Mammary epithelial cell (primary cell): ENCODE measurements at regions of chr10 and their contacts with region 1.

Region 1: GRCh38 chr10:689433-690371 is at the start of gene DIP2C:
- DNase-seq: peak; percentile 47
- H3K4me3 ChIP-seq: no peak within 1 kb of the TSS
- H3K27ac ChIP-seq: no peak within 1 kb of the TSS
- H3K4me1 ChIP-seq: no peaks in the 10 kb centered on the region
- H3K27me3 ChIP-seq: peaks cover 2% of the 10 kb centered on the region
- CTCF ChIP-seq: no peak
- total RNA-seq, gene DIP2C: 7.1 to 7.3 TPM

Region 2: DNA sequence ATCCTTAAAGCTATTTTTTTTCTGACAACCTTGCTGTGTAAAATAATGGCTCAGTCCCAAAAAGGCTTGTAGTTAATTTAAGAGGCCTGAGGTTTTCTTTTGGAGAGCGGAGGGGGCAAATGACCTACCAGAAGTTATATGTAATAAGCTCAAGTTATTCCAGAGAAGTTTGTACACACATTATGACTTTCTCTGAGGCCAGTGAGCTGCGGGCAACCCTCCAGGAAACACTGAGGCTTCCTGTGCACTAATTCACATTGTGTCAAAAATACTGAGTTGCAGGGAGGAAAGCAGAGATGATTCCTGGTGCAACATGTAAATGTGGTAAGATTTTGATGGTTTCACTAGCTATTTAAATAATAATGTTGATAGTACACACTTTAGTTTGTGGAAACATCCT is 188.8 kb before region 1 on chr10:
- CTCF ChIA-PET with region 1: no interaction called
- dilution Hi-C with region 1: no loop called
- in situ Hi-C with region 1: loop called in 1 of 2 experiments (anchors 10 kb)
- intact Hi-C with region 1: no loop called
- DNase-seq: no peak
- H3K4me3 ChIP-seq: no peak overlapping the region
- H3K27ac ChIP-seq: no peak overlapping the region
- H3K4me1 ChIP-seq: no peaks in the 10 kb centered on the region
- H3K27me3 ChIP-seq: no peaks in the 10 kb centered on the region
- CTCF ChIP-seq: no peak

Region 3: DNA sequence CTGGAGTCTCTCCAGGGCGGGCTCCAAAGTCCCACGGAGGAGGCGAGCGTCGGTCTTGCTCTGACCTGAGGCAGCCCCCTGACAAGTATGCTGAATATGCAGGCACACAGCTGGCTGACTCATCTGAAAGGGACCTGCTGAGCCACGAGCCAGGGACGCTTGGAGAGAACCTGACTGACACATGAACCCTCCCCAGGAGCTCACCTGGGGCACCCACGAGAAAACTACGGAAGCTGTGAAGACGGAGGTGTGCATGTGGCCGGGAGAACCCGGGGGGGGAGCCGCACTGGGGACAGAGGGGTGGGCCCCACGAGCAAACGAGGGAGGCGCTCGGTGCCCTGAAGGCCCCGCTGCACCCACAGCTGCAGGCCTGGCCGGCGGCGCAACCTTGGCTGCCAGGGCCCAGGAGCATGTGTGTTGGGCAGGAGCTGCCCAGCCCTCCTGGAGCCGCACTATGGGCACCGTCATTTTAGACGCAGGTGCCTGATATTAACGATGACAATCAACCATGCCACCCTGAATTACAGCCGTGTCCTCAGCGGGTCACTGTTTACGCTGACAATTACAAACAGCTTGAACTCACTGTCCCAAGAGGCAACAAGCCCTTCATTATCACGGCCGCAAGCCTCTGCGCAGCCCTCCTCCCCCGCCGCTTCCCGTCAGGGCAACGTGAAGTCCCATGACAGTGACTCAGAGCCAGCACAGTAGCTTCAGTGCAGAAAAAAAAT is 64.9 kb before region 1 on chr10:
- CTCF ChIA-PET with region 1: no interaction called
- dilution Hi-C with region 1: no loop called
- in situ Hi-C with region 1: no loop called
- intact Hi-C with region 1: loop called (anchors 2 kb)
- DNase-seq: peak; percentile 32
- H3K4me3 ChIP-seq: no peak overlapping the region
- H3K27ac ChIP-seq: no peak overlapping the region
- H3K4me1 ChIP-seq: no peaks in the 10 kb centered on the region
- H3K27me3 ChIP-seq: no peaks in the 10 kb centered on the region
- CTCF ChIP-seq: no peak

Region 4: GRCh38 chr10:642186-642877 is 47.4 kb before region 1 on chr10:
- CTCF ChIA-PET with region 1: no interaction called
- dilution Hi-C with region 1: no loop called
- in situ Hi-C with region 1: no loop called
- intact Hi-C with region 1: no loop called
- DNase-seq: no peak
- H3K4me3 ChIP-seq: no peak overlapping the region
- H3K27ac ChIP-seq: no peak overlapping the region
- H3K4me1 ChIP-seq: no peaks in the 10 kb centered on the region
- H3K27me3 ChIP-seq: no peaks in the 10 kb centered on the region
- CTCF ChIP-seq: no peak

Region 5: GRCh38 chr10:1034758-1035157 is 345.1 kb after region 1 on chr10:
- CTCF ChIA-PET with region 1: no interaction called
- dilution Hi-C with region 1: no loop called
- in situ Hi-C with region 1: no loop called
- intact Hi-C with region 1: no loop called
- DNase-seq: no peak
- H3K4me3 ChIP-seq: no peak overlapping the region
- H3K27ac ChIP-seq: no peak overlapping the region
- H3K4me1 ChIP-seq: peaks cover 17% of the 10 kb centered on the region
- H3K27me3 ChIP-seq: no peaks in the 10 kb centered on the region
- CTCF ChIP-seq: no peak